ENCODE measurements at regions of chr4 and their contacts with region 1.

Region 1: GRCh38 chr4:41214136-41214824 is at the start of gene APBB2:
- DNase-seq: peak; percentile 98
- H3K4me3 ChIP-seq: peak within 1 kb of the TSS; percentile 75
- H3K27ac ChIP-seq: peak within 1 kb of the TSS; percentile 50
- H3K4me1 ChIP-seq: peaks cover 21% of the 10 kb centered on the region
- H3K27me3 ChIP-seq: peaks cover 17% of the 10 kb centered on the region
- CTCF ChIP-seq: peak; percentile 84
- total RNA-seq, gene APBB2: 10.3 and 17.6 TPM in 2 replicates

Region 2: GRCh38 chr4:40736910-40737309 is 477.4 kb before region 1 on chr4:
- CTCF ChIA-PET with region 1: no interaction called
- POLR2A ChIA-PET with region 1: no interaction called
- intact Hi-C with region 1: loop called (anchors 5 kb)
- DNase-seq: peak; percentile 53
- H3K4me3 ChIP-seq: no peak overlapping the region
- H3K27ac ChIP-seq: no peak overlapping the region
- H3K4me1 ChIP-seq: peaks cover 1% of the 10 kb centered on the region
- H3K27me3 ChIP-seq: no peaks in the 10 kb centered on the region
- CTCF ChIP-seq: peak; percentile 59

Region 3: GRCh38 chr4:40908702-40909362 is 305.4 kb before region 1 on chr4:
- CTCF ChIA-PET with region 1: interaction called, 5 read pairs
- POLR2A ChIA-PET with region 1: no interaction called
- intact Hi-C with region 1: loop called (anchors 1 kb)
- DNase-seq: peak; percentile 93
- H3K4me3 ChIP-seq: no peak overlapping the region
- H3K27ac ChIP-seq: peak overlapping the region; percentile 44
- H3K4me1 ChIP-seq: peaks cover 17% of the 10 kb centered on the region
- H3K27me3 ChIP-seq: no peaks in the 10 kb centered on the region
- CTCF ChIP-seq: peak; percentile 98

Region 4: DNA sequence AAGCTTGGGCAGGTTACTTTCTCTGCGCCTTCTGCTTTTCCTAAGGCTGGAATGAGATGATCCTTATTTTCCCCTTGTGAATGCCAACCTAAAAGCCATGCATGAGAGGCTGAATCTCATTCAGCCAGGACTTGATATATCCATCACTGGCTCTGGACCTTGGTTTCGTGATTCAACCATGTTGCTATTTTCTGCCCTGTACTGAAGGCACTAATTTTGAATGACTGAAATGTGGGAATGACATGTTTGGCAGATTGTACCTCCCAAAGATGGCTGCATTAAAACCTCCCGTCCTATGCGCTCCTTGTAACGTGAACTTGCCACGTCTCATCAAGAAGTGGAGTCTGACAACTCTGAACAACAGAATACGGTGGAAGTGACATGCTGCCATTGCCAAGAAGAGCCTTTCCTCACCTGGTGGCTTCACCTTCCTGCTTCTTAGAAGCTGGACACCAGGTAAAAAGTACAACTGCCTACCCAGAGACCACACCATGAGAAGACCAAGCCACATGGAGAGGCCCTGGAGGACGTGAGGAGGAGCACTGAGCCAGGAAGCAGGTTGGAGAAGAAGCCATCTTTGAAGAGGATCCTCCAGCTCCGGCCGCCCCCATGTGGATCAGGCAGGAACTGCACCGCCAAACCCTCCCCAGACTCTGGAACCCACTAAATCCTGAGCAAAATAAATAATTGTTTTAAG is 290.0 kb before region 1 on chr4:
- CTCF ChIA-PET with region 1: interaction called, 3 read pairs
- POLR2A ChIA-PET with region 1: no interaction called
- intact Hi-C with region 1: loop called (anchors 2 kb)
- DNase-seq: peak; percentile 79
- H3K4me3 ChIP-seq: no peak overlapping the region
- H3K27ac ChIP-seq: no peak overlapping the region
- H3K4me1 ChIP-seq: peaks cover 6% of the 10 kb centered on the region
- H3K27me3 ChIP-seq: no peaks in the 10 kb centered on the region
- CTCF ChIP-seq: peak; percentile 95

Region 5: GRCh38 chr4:40976343-40976742 is 237.9 kb before region 1 on chr4:
- CTCF ChIA-PET with region 1: interaction called, 12 read pairs
- POLR2A ChIA-PET with region 1: interaction called, 4 read pairs
- intact Hi-C with region 1: loop called (anchors 1 kb)
- DNase-seq: peak; percentile 62
- H3K4me3 ChIP-seq: no peak overlapping the region
- H3K27ac ChIP-seq: no peak overlapping the region
- H3K4me1 ChIP-seq: no peaks in the 10 kb centered on the region
- H3K27me3 ChIP-seq: no peaks in the 10 kb centered on the region
- CTCF ChIP-seq: peak; percentile 77

Region 6: GRCh38 chr4:41120297-41121217 is 93.7 kb before region 1 on chr4:
- CTCF ChIA-PET with region 1: no interaction called
- POLR2A ChIA-PET with region 1: no interaction called
- intact Hi-C with region 1: no loop called
- DNase-seq: no peak
- H3K4me3 ChIP-seq: no peak overlapping the region
- H3K27ac ChIP-seq: no peak overlapping the region
- H3K4me1 ChIP-seq: no peaks in the 10 kb centered on the region
- H3K27me3 ChIP-seq: no peaks in the 10 kb centered on the region
- CTCF ChIP-seq: no peak

Region 7: GRCh38 chr4:41146716-41147506 is 67.4 kb before region 1 on chr4:
- CTCF ChIA-PET with region 1: interaction called, 4 read pairs
- POLR2A ChIA-PET with region 1: interaction called, 29 read pairs
- intact Hi-C with region 1: no loop called
- DNase-seq: no peak
- H3K4me3 ChIP-seq: no peak overlapping the region
- H3K27ac ChIP-seq: no peak overlapping the region
- H3K4me1 ChIP-seq: peaks cover 16% of the 10 kb centered on the region
- H3K27me3 ChIP-seq: peaks cover 3% of the 10 kb centered on the region
- CTCF ChIP-seq: no peak

Region 8: DNA sequence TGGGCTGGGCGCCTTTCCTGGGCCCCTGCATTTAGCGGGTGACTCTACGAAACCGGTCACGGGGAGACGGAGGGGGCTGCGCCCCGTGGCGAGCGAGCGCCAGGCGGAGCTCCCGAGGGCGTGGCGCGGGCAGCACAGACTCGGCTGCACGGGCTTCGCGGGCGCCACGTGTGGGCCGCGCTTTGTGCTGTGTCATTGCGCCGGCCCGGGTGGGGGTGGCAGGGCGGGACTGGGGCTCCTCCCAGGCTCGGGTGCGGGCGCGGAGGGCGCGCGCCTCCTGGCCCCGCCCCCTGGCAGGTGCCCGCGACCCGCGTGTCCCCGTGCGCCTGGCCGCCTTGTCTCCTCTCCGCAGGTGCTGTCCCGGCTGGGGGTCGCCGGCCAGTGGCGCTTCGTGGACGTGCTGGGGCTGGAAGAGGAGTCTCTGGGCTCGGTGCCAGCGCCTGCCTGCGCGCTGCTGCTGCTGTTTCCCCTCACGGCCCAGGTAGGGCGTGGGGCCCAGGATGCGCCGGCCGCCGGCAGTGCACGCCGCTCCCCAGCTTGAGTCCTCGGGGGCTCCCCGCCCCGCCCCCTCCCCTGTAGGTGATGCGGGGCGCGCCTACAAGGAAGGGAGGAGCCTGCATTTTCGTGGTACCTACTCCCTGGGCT is 43.1 kb after region 1 on chr4:
- CTCF ChIA-PET with region 1: interaction called, 4 read pairs
- POLR2A ChIA-PET with region 1: interaction called, 7 read pairs
- intact Hi-C with region 1: loop called (anchors 5 kb)
- DNase-seq: peak; percentile 85
- H3K4me3 ChIP-seq: peak overlapping the region; percentile 93
- H3K27ac ChIP-seq: peak overlapping the region; percentile 95
- H3K4me1 ChIP-seq: peaks cover 22% of the 10 kb centered on the region
- H3K27me3 ChIP-seq: no peaks in the 10 kb centered on the region
- CTCF ChIP-seq: no peak

Measured in A673 (cell line).